Esophagus squamous epithelium (tissue), 5 donors: ENCODE measurements at regions of chr1 and their contacts with region 1.

Region 1: GRCh38 chr1:210214573-210215409 is 17.8 kb upstream of the SERTAD4 start:
- DNase-seq: no peak
- H3K4me3 ChIP-seq: no peak overlapping the region
- H3K27ac ChIP-seq: no peak overlapping the region
- H3K4me1 ChIP-seq: no peaks in the 10 kb centered on the region
- H3K27me3 ChIP-seq: peaks cover 0 to 8% (median 0%) of the 10 kb centered on the region in 4 donors
- CTCF ChIP-seq: no peak
- POLR2A ChIP-seq: no peak

Region 2: DNA sequence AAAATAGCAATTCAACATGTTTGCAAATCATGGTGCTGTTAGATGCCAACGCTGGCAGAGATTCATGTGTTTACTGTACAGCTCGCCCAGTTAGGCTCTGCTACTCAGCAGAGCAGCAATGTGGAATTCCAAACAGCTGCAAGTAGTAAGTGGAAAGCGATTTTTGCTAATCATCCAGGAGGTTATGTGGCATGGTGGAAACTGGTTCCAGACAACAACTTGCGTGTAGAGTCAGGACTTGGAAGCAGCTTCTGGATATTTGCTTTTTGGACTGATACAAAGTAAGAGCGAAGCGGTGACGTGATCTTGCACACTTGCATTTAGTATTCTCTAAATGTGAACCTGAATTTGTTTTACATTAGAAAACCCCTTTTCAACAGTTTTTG is 86.8 kb after region 1 on chr1:
- intact Hi-C with region 1: loop called (anchors 10 kb)
- DNase-seq: no peak
- H3K4me3 ChIP-seq: no peak overlapping the region
- H3K27ac ChIP-seq: peak overlapping the region; percentile 16 to 80 (median 67)
- H3K4me1 ChIP-seq: peaks cover 8 to 58% (median 36%) of the 10 kb centered on the region in 3 donors
- H3K27me3 ChIP-seq: peaks cover 0 to 9% (median 0%) of the 10 kb centered on the region in 4 donors
- CTCF ChIP-seq: no peak
- POLR2A ChIP-seq: no peak